Left cardiac atrium (tissue), 4 donors: ENCODE measurements at regions of chr12 and their contacts with region 1.

Region 1: DNA sequence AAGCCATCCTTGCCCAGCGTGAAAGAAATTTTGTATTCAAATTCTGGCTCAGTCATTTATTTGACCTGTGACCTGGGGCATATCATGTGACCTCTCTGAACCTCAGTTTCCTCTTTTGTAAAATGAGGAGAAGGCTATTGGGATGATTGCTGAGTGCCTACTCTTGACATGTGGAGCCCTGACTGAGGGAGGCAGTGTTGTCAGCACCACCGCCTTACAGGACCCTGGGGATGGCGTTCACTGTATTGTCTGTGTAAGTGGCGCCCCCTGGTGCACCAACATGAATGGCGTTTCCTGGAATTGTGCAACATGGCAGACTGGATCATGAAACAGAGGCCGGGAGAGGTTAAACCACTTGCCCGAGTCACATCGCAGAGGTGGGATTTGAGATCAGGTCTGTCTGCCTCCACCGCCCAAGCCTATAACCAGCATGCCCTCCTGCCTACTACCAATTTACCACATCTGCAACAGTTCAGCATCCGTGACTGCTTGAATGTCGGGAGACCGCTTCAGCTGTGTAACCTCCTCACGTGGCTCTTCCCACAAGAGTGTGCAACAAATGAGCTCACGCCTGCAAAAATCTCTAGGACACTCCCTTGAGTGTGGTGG is 20.1 kb upstream of the CCDC63 start:
- DNase-seq: peak; percentile 87
- ATAC-seq: peak; percentile 97

Region 2: DNA sequence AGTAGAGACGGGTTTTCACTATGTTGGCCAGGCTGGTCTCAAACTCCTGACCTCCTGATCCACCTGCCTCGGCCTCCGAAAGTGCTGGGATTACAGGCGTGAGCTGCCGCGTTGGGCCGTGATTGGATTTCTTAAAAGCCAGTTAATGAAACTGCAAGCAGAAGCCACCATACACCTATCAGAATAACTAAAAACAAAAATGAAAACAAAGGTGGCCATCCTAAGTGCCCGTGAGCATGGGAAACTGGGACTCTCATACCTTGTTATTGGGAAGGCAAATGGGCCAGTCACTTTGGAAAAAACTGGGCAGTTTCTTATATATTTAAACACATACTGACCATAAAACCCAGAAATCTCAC is 220.5 kb before region 1 on chr12:
- intact Hi-C with region 1: loop called in 1 of 2 experiments (anchors 5 kb)
- DNase-seq: no peak
- ATAC-seq: no peak